Endothelial cell of umbilical vein (primary cell): ENCODE measurements at regions of chr4 and their contacts with region 1.

Region 1: GRCh38 chr4:53908661-53909078 is 155.7 kb downstream of the CHIC2 start:
- DNase-seq: peak; percentile 87
- H3K4me3 ChIP-seq: no peak overlapping the region
- H3K27ac ChIP-seq: no peak overlapping the region
- H3K4me1 ChIP-seq: peaks cover 3% of the 10 kb centered on the region
- H3K27me3 ChIP-seq: peaks cover 26% of the 10 kb centered on the region in 2 experiments
- CTCF ChIP-seq: peak; percentile 77 to 85
- POLR2A ChIP-seq: no peak

Region 2: GRCh38 chr4:52983563-52984303 is 924.9 kb before region 1 on chr4:
- CTCF ChIA-PET with region 1: no interaction called
- POLR2A ChIA-PET with region 1: no interaction called
- dilution Hi-C with region 1: no loop called
- intact Hi-C with region 1: no loop called
- DNase-seq: peak; percentile 64
- H3K4me3 ChIP-seq: no peak overlapping the region
- H3K27ac ChIP-seq: no peak overlapping the region
- H3K4me1 ChIP-seq: no peaks in the 10 kb centered on the region
- H3K27me3 ChIP-seq: no peaks in the 10 kb centered on the region
- CTCF ChIP-seq: peak; percentile 38 to 44
- POLR2A ChIP-seq: no peak

Region 3: GRCh38 chr4:53490965-53491622 is 417.6 kb before region 1 on chr4:
- CTCF ChIA-PET with region 1: interaction called, 3 read pairs
- POLR2A ChIA-PET with region 1: no interaction called
- dilution Hi-C with region 1: no loop called
- intact Hi-C with region 1: loop called (anchors 5 kb)
- DNase-seq: peak; percentile 85
- H3K4me3 ChIP-seq: no peak overlapping the region
- H3K27ac ChIP-seq: no peak overlapping the region
- H3K4me1 ChIP-seq: peaks cover 6% of the 10 kb centered on the region
- H3K27me3 ChIP-seq: no peaks in the 10 kb centered on the region
- CTCF ChIP-seq: peak; percentile 52 to 55
- POLR2A ChIP-seq: no peak

Region 4: GRCh38 chr4:53512608-53513007 is 396.1 kb before region 1 on chr4:
- CTCF ChIA-PET with region 1: no interaction called
- POLR2A ChIA-PET with region 1: no interaction called
- dilution Hi-C with region 1: no loop called
- intact Hi-C with region 1: no loop called
- DNase-seq: no peak
- H3K4me3 ChIP-seq: no peak overlapping the region
- H3K27ac ChIP-seq: no peak overlapping the region
- H3K4me1 ChIP-seq: no peaks in the 10 kb centered on the region
- H3K27me3 ChIP-seq: peaks cover 10 to 13% of the 10 kb centered on the region in 2 experiments
- CTCF ChIP-seq: no peak
- POLR2A ChIP-seq: no peak

Region 5: DNA sequence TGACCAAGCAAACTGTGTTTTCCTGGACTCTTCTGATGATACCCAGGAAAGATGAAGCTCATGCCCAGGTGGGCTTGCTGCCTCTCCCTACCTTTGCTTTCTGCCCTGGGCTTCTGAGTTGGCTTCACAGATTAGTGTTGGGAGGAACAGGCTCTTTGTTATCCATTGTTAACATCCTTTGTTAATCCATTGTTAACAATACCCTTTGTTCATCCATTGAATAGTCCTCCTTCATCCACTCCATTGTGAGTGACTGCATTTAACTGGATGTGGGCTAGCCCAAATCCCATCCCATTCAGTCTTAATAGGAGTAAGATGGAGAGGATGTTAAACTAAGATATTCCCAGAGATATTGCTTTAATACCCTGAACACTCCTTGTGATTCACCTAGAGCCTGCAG is 118.4 kb before region 1 on chr4:
- CTCF ChIA-PET with region 1: no interaction called
- POLR2A ChIA-PET with region 1: no interaction called
- dilution Hi-C with region 1: no loop called
- intact Hi-C with region 1: no loop called
- DNase-seq: no peak
- H3K4me3 ChIP-seq: no peak overlapping the region
- H3K27ac ChIP-seq: no peak overlapping the region
- H3K4me1 ChIP-seq: no peaks in the 10 kb centered on the region
- H3K27me3 ChIP-seq: peaks cover 4 to 7% of the 10 kb centered on the region in 2 experiments
- CTCF ChIP-seq: no peak
- POLR2A ChIP-seq: no peak

Region 6: DNA sequence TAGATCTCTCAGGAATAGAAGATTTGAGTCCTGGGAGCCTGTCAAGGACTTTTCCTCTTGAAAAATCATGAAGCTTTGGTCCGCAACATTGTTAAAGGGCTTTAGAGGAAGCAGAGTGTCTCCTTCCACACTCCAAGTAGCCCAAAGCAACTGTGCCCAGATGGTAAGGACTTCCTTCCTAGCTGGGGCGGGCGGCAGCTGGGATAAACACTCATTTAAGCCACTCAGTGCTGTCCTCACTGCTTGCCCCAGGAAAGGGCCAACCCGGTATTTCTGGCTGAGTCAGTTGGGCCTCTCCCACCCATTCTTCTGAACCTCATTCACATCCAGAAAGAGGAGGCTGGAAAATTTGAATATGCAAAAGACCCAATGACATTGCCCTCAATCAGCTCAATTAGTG is 11.4 kb after region 1 on chr4:
- CTCF ChIA-PET with region 1: interaction called, 19 read pairs
- POLR2A ChIA-PET with region 1: no interaction called
- dilution Hi-C with region 1: no loop called
- intact Hi-C with region 1: no loop called
- DNase-seq: no peak
- H3K4me3 ChIP-seq: no peak overlapping the region
- H3K27ac ChIP-seq: no peak overlapping the region
- H3K4me1 ChIP-seq: peaks cover 26% of the 10 kb centered on the region
- H3K27me3 ChIP-seq: no peaks in the 10 kb centered on the region
- CTCF ChIP-seq: no peak
- POLR2A ChIP-seq: no peak

Region 7: GRCh38 chr4:54217642-54218495 is 309.2 kb after region 1 on chr4:
- CTCF ChIA-PET with region 1: interaction called, 92 read pairs
- POLR2A ChIA-PET with region 1: no interaction called
- dilution Hi-C with region 1: no loop called
- intact Hi-C with region 1: loop called (anchors 1 kb)
- DNase-seq: peak; percentile 84
- H3K4me3 ChIP-seq: peak overlapping the region; percentile 34 to 78 (median 58)
- H3K27ac ChIP-seq: peak overlapping the region; percentile 30
- H3K4me1 ChIP-seq: peaks cover 2% of the 10 kb centered on the region
- H3K27me3 ChIP-seq: peaks cover 2 to 7% of the 10 kb centered on the region in 2 experiments
- CTCF ChIP-seq: peak; percentile 82 to 84
- POLR2A ChIP-seq: no peak

Region 8: GRCh38 chr4:54228056-54228527 is 319.4 kb after region 1 on chr4:
- CTCF ChIA-PET with region 1: interaction called, 198 read pairs
- POLR2A ChIA-PET with region 1: no interaction called
- dilution Hi-C with region 1: no loop called
- intact Hi-C with region 1: loop called (anchors 1 kb)
- DNase-seq: no peak
- H3K4me3 ChIP-seq: peak overlapping the region; percentile 15 to 52 (median 19)
- H3K27ac ChIP-seq: no peak overlapping the region
- H3K4me1 ChIP-seq: peaks cover 41% of the 10 kb centered on the region
- H3K27me3 ChIP-seq: peaks cover 65 to 78% of the 10 kb centered on the region in 2 experiments
- CTCF ChIP-seq: peak; percentile 72 to 88
- POLR2A ChIP-seq: no peak

Region 9: DNA sequence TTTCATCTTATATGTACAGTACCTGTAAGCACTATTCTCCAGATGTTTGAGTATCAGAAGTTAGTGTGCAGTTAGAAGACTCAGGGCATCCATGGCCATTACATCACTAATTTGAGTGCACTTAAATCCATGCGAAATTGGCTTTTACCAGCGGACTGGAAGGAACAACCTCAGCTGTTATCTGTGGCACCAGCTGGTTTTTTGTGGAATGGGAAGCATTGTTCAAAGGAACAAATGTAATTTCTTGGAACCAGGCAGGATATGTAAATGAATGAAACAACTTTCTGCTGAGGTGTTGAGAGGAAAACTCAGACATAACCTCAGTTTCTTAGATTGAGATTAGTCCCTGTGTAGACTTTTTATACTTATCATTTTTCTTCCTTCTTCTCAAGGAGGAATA is 380.6 kb after region 1 on chr4:
- CTCF ChIA-PET with region 1: no interaction called
- POLR2A ChIA-PET with region 1: no interaction called
- dilution Hi-C with region 1: no loop called
- intact Hi-C with region 1: no loop called
- DNase-seq: no peak
- H3K4me3 ChIP-seq: no peak overlapping the region
- H3K27ac ChIP-seq: no peak overlapping the region
- H3K4me1 ChIP-seq: peaks cover 3% of the 10 kb centered on the region
- H3K27me3 ChIP-seq: peaks cover 3 to 24% of the 10 kb centered on the region in 2 experiments
- CTCF ChIP-seq: no peak
- POLR2A ChIP-seq: no peak